Activated CD8-positive, alpha-beta T cell treated with anti-CD3 and anti-CD28 coated beads for 36 hours (primary cell): ENCODE measurements at regions of chr17 and their contacts with region 1.

Region 1: DNA sequence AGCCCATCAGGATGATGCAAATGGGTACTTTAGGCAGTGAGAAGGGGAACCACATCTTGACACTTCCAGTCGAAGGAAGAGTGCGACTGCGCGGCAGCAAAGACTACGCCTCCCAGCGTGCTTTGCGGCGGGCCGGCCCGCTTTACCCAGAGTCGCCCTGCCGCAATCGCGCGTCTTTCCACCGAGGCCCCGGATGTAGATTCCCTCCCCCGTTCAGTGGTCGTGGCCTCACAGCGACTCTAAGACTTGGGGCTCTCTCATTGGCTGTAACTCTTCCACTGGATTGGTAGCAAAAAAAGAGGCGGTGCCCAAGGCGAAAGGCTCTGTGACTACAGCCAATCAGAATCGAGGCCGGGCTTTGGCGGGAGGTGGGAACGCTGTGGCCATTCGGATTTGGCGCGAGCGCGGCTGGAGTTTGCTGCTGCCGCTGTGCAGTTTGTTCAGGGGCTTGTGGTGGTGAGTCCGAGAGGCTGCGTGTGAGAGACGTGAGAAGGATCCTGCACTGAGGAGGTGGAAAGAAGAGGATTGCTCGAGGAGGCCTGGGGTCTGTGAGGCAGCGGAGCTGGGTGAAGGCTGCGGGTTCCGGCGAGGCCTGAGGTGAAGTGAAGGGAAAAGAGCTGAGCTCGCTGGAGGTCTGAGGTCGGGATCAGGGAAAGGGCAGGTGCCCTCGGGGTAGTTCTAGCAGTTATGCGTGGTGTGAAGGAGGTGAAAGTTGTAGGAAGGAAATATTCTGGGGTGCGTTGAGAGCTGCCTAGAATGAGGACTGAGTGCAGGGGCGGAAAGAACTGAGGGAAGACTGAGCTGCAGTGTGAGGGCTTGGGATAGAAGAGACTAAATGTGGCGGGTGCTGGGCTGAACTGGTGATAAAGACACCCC is at the start of gene CDC6:
- DNase-seq: peak; percentile 100
- ATAC-seq: peak; percentile 89
- H3K4me3 Mint-ChIP-seq: peak within 1 kb of the TSS; percentile 99
- H3K27ac Mint-ChIP-seq: peak within 1 kb of the TSS; percentile 96
- H3K4me1 Mint-ChIP-seq: peaks cover 54% of the 10 kb centered on the region
- H3K27me3 Mint-ChIP-seq: no peaks in the 10 kb centered on the region
- CTCF ChIP-seq: no peak
- total RNA-seq, gene CDC6: 110 to 118 TPM

Region 2: DNA sequence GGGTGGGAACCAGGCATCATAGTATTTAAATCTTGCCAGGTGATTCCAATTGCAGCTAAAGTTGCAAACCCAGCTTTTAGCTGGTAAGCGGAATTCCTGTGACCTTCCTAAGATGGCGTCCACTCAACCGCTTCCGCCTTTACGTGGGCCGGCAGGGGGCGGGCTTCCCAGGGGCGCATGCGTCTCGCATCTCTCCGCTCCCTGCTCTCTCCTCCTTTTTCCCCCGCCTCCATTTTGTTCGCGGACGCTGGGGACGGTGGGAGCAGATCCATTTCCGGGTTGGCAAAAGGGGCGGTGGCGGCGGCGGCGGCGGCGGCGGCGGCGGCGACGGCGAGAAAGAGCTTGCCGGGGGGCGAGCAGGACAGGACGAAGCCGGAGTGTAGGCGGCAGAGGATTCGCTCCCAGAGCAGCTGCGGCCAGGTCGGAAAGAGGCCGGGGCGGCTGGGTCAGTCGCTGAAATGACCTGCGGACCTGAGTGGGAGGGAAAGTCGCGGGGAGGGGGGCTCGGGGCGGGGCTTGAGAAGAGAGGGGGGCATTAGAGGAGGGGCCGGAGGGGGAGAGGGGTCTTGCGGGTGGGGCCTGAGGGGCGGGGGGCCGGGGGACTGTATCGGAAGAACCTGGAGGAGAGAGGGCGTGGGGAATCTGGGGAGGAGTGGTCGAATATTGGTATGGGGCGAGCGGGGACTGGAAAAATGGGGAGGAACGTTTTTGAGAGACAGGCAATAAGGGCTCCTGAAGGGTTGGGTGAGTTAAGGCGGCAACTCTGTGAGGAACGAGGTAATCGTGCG is 68.5 kb before region 1 on chr17 and contains the start of gene WIPF2:
- CTCF ChIA-PET with region 1: interaction called, 13 read pairs
- POLR2A ChIA-PET with region 1: interaction called, 13 read pairs
- intact Hi-C with region 1: loop called (anchors 5 kb)
- DNase-seq: peak; percentile 98
- ATAC-seq: peak; percentile 96
- H3K4me3 Mint-ChIP-seq: peak within 1 kb of the TSS; percentile 96
- H3K27ac Mint-ChIP-seq: peak within 1 kb of the TSS; percentile 100
- H3K4me1 Mint-ChIP-seq: peaks cover 26% of the 10 kb centered on the region
- H3K27me3 Mint-ChIP-seq: no peaks in the 10 kb centered on the region
- CTCF ChIP-seq: no peak
- total RNA-seq, gene WIPF2: 15.3 to 17.9 TPM

Region 3: DNA sequence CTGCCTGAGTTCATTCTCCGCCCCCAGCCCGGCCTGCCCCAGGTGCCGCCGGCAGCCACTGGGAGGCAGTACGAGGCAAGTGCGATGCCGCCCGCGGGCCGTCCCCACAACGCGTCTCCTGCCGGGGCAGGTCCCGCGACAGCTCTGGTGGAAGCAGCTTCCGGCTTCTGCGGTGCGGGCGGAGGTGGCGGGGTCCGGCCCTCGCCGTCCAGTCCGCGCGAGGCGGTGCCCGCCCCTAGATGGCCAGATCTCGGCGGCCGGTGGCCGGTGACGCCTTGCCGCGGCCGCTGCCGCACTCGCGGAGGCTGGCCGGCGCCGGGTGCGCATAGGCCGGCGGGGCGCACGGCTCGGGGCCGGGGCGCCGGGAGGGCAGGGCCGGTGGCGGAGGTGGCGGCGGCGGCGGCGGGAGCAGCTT is 75.0 kb after region 1 on chr17:
- CTCF ChIA-PET with region 1: interaction called, 780 read pairs
- POLR2A ChIA-PET with region 1: no interaction called
- intact Hi-C with region 1: no loop called
- DNase-seq: peak; percentile 93
- ATAC-seq: peak; percentile 90
- H3K4me3 Mint-ChIP-seq: peak overlapping the region; percentile 72
- H3K27ac Mint-ChIP-seq: no peak overlapping the region
- H3K4me1 Mint-ChIP-seq: peaks cover 6% of the 10 kb centered on the region
- H3K27me3 Mint-ChIP-seq: peaks cover 4% of the 10 kb centered on the region
- CTCF ChIP-seq: peak; percentile 88